Posterior cingulate gyrus (tissue), 11 donors: ENCODE measurements at regions of chr2 and their contacts with region 1.

Region 1: GRCh38 chr2:29196792-29197788 is 81.9 kb downstream of the CLIP4 start:
- DNase-seq: peak; percentile 39 to 95 (median 75)

Region 2: GRCh38 chr2:28801726-28802487 is 395.2 kb before region 1 on chr2:
- intact Hi-C with region 1: no loop called
- DNase-seq: no peak

Region 3: DNA sequence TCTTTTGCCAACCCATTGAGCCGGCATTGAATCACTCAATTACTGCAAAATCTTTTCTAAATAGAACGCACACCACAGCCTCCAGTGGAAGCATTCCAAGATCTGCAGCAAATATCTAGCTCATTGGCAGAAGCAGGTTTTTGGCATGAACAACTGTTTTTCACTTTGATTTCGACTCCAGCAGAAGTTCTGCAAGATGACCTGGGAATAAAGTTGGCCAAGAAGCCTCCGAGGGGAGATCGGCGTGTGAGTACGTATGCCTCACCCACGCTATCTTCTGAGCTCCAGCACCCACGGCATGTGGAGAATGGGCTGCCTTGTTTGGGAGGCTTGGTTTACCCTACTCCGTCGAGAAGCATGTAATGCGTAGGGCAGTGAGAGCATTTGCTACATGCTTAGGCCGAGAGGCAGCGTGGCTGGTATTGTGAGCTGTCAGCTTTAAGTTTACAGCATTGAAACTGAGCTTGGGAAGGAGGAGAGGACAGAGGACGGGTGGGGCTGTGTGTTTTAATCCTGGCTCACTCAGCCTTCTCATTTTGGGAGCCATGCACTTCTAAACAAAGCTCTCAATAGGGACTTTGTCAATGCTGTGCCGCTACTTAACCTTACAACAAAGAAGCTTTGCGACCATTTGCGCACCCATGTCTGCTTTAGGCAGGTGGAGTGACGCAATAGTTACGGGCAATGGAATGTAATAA is 133.3 kb before region 1 on chr2:
- intact Hi-C with region 1: loop called (anchors 10 kb)
- DNase-seq: peak in 5 of 10 donors; percentile 23 to 90 (median 42)

Region 4: GRCh38 chr2:29351916-29352591 is 155.0 kb after region 1 on chr2:
- intact Hi-C with region 1: no loop called
- DNase-seq: no peak

Region 5: GRCh38 chr2:29495536-29496060 is 298.5 kb after region 1 on chr2:
- intact Hi-C with region 1: no loop called
- DNase-seq: no peak